Ascending aorta (tissue), 2 donors: ENCODE measurements at regions of chr5 and their contacts with region 1.

Region 1: DNA sequence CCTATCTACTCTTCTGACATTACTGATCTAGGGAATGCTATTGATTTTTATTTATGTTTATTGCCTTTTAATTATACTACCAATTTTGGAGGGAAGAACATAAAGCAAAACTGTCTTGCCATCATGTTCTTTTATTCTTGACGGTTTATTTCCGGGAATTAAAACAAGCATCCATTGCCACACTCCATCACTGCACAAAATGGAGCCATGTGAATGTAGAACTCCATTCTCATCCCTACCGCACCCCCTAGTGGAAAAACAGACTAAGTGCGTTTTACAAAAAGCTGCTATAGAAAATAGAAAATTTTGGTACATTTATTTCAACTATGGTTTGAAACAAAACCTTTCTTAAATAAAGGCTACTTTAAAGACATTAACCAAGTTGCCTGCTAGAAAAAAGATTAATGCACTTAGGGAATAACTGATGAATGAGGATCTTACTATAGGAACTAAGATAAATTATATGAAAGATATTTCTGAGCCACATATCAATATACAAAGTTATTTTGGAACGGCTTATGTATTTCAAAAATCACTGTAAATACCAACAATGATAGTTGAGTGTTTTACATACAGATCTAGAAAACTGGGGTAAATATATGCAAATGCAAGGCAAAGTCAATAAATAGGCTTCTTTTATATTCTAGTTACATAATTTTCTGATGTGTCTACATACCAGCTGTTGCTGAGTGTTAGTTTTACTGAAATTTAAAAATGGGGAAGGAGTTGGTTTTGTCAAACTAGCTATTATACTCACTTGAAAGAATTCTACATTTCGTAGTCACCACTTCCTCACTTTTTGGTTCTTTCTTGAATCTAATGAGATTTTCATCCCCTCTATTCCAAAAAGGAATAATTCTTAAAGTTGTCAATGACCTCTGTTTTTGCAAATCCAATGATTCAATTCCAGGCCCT is 26.5 kb downstream of the OXCT1 start:
- DNase-seq: no peak
- H3K4me3 ChIP-seq: no peak overlapping the region
- H3K27ac ChIP-seq: no peak overlapping the region
- H3K4me1 ChIP-seq: no peaks in the 10 kb centered on the region
- H3K27me3 ChIP-seq: no peaks in the 10 kb centered on the region
- CTCF ChIP-seq: peak; percentile 57 to 81 (median 70)

Region 2: GRCh38 chr5:40904205-40904993 is 939.3 kb before region 1 on chr5:
- intact Hi-C with region 1: loop called (anchors 5 kb)
- DNase-seq: peak in 1 of 2 donors; percentile 73
- H3K4me3 ChIP-seq: no peak overlapping the region
- H3K27ac ChIP-seq: peak overlapping the region; percentile 18 to 41
- H3K4me1 ChIP-seq: peaks cover 0 to 8% of the 10 kb centered on the region in 2 donors
- H3K27me3 ChIP-seq: no peaks in the 10 kb centered on the region
- CTCF ChIP-seq: peak; percentile 49 to 81 (median 75)

Region 3: GRCh38 chr5:41270423-41271251 is 573.1 kb before region 1 on chr5:
- intact Hi-C with region 1: loop called (anchors 1 kb)
- DNase-seq: peak in 1 of 2 donors; percentile 64
- H3K4me3 ChIP-seq: no peak overlapping the region
- H3K27ac ChIP-seq: no peak overlapping the region
- H3K4me1 ChIP-seq: no peaks in the 10 kb centered on the region
- H3K27me3 ChIP-seq: no peaks in the 10 kb centered on the region
- CTCF ChIP-seq: peak; percentile 47 to 76 (median 64)

Region 4: GRCh38 chr5:41649659-41650058 is 194.1 kb before region 1 on chr5:
- intact Hi-C with region 1: no loop called
- DNase-seq: no peak
- H3K4me3 ChIP-seq: no peak overlapping the region
- H3K27ac ChIP-seq: no peak overlapping the region
- H3K4me1 ChIP-seq: peaks cover 0 to 17% of the 10 kb centered on the region in 2 donors
- H3K27me3 ChIP-seq: no peaks in the 10 kb centered on the region
- CTCF ChIP-seq: no peak

Region 5: GRCh38 chr5:41695920-41696582 is 147.7 kb before region 1 on chr5:
- intact Hi-C with region 1: loop called (anchors 1 kb)
- DNase-seq: no peak
- H3K4me3 ChIP-seq: no peak overlapping the region
- H3K27ac ChIP-seq: no peak overlapping the region
- H3K4me1 ChIP-seq: no peaks in the 10 kb centered on the region
- H3K27me3 ChIP-seq: no peaks in the 10 kb centered on the region
- CTCF ChIP-seq: peak in 2 of 3 experiments; percentile 24 to 51

Region 6: GRCh38 chr5:41794473-41794872 is 49.2 kb before region 1 on chr5:
- intact Hi-C with region 1: loop called (anchors 5 kb)
- DNase-seq: peak in 1 of 2 donors; percentile 71
- H3K4me3 ChIP-seq: no peak overlapping the region
- H3K27ac ChIP-seq: peak overlapping the region; percentile 65 to 73
- H3K4me1 ChIP-seq: peaks cover 0 to 16% of the 10 kb centered on the region in 2 donors
- H3K27me3 ChIP-seq: no peaks in the 10 kb centered on the region
- CTCF ChIP-seq: no peak